Right cardiac atrium (tissue), 5 donors: ENCODE measurements at regions of chr5 and their contacts with region 1.

Region 1: DNA sequence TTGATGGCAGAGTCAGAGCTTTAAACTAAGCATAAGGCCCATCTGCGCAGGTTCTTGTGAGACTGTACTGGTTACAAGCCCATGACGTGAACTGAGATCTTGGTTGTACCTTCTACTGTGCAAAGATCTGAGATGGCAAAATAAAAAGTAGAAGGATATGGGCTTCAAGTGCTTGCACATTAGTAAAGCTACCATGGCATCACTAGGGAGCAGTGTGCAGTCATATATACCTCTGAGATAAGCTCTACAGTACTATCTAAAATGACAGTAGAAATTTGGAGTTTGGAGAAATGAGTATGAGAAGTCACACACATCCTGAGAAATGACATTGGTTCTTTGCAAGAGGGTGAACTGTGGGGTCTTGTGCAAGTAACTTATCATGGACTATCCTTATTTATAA is 408.2 kb upstream of the PRR16 start:
- DNase-seq: no peak
- ATAC-seq: peak; percentile 37 to 71
- H3K4me3 ChIP-seq: no peak overlapping the region
- H3K27ac ChIP-seq: peak overlapping the region; percentile 30
- H3K4me1 ChIP-seq: no peaks in the 10 kb centered on the region
- H3K27me3 ChIP-seq: no peaks in the 10 kb centered on the region

Region 2: GRCh38 chr5:120108586-120109248 is 52.9 kb after region 1 on chr5:
- intact Hi-C with region 1: no loop called
- DNase-seq: no peak
- ATAC-seq: no peak
- H3K4me3 ChIP-seq: no peak overlapping the region
- H3K27ac ChIP-seq: no peak overlapping the region
- H3K4me1 ChIP-seq: no peaks in the 10 kb centered on the region
- H3K27me3 ChIP-seq: no peaks in the 10 kb centered on the region

Region 3: DNA sequence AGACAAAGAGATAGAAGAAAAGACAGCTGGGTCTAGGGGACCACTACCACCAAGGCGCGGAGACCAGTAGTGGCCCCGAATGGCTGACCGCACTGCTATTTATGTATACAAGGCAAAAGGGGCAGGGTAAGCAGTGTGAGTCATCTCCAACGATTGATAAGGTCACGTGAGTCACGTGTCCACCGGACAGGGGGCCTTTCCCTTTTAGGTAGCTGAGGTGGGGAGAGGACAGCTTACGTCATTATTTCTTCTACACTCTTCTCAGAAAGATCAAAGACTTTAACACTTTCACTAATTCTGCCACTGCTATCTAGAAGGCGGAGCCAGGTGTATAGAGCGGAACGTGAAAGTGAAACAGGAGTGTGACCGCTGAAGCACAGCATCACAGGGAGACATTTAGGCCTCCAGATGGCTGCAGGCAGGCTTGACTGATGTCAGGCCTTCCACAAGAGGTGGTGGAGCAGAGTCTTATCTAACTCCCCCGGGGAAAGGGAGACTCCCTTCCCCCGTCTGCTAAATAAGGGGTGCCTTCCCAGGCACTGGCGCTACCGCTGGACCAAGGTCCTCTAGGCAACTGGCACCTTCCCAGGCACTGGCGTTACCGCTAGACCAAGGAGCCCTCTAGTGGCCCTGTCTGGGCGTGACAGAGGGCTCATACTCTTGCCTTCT is 402.1 kb after region 1 on chr5:
- intact Hi-C with region 1: loop called (anchors 5 to 10 kb)
- DNase-seq: peak; percentile 83 to 93 (median 88)
- ATAC-seq: peak; percentile 66 to 75
- H3K4me3 ChIP-seq: no peak overlapping the region
- H3K27ac ChIP-seq: no peak overlapping the region
- H3K4me1 ChIP-seq: no peaks in the 10 kb centered on the region
- H3K27me3 ChIP-seq: no peaks in the 10 kb centered on the region

Region 4: GRCh38 chr5:120463991-120464626 is 408.3 kb after region 1 on chr5 and contains the start of gene PRR16:
- intact Hi-C with region 1: loop called (anchors 5 to 10 kb)
- DNase-seq: peak; percentile 47 to 84 (median 82)
- ATAC-seq: peak; percentile 92 to 95
- H3K4me3 ChIP-seq: peak within 1 kb of the TSS; percentile 90
- H3K27ac ChIP-seq: peak within 1 kb of the TSS; percentile 34
- H3K4me1 ChIP-seq: no peaks in the 10 kb centered on the region
- H3K27me3 ChIP-seq: no peaks in the 10 kb centered on the region
- total RNA-seq, gene PRR16: 6.9 to 13.3 (median 8.9) TPM